ENCODE measurements at regions of chr1 and their contacts with region 1.

Region 1: GRCh38 chr1:244835276-244836134 is at the start of gene COX20:
- DNase-seq: peak; percentile 92
- ATAC-seq: peak; percentile 60
- H3K4me3 Mint-ChIP-seq: peak within 1 kb of the TSS; percentile 80
- H3K27ac Mint-ChIP-seq: peak within 1 kb of the TSS; percentile 99
- H3K4me1 Mint-ChIP-seq: peaks cover 43% of the 10 kb centered on the region
- H3K27me3 Mint-ChIP-seq: no peaks in the 10 kb centered on the region
- total RNA-seq, gene COX20: 32.0 to 33.2 TPM

Region 2: GRCh38 chr1:243255791-243256512 is 1579.6 kb before region 1 on chr1 and contains the start of gene SDCCAG8:
- CTCF ChIA-PET with region 1: no interaction called
- POLR2A ChIA-PET with region 1: no interaction called
- intact Hi-C with region 1: loop called in 1 of 2 experiments (anchors 2 kb)
- DNase-seq: peak; percentile 96
- ATAC-seq: peak; percentile 82
- H3K4me3 Mint-ChIP-seq: peak within 1 kb of the TSS; percentile 100
- H3K27ac Mint-ChIP-seq: peak within 1 kb of the TSS; percentile 97
- H3K4me1 Mint-ChIP-seq: peaks cover 27% of the 10 kb centered on the region
- H3K27me3 Mint-ChIP-seq: no peaks in the 10 kb centered on the region
- total RNA-seq, gene SDCCAG8: 26.4 to 26.5 TPM

Region 3: GRCh38 chr1:244451951-244452795 is 383.3 kb before region 1 on chr1:
- CTCF ChIA-PET with region 1: no interaction called
- POLR2A ChIA-PET with region 1: no interaction called
- intact Hi-C with region 1: loop called (anchors 1 kb)
- DNase-seq: peak; percentile 99
- ATAC-seq: peak; percentile 91
- H3K4me3 Mint-ChIP-seq: peak overlapping the region; percentile 97
- H3K27ac Mint-ChIP-seq: peak overlapping the region; percentile 97
- H3K4me1 Mint-ChIP-seq: peaks cover 40% of the 10 kb centered on the region
- H3K27me3 Mint-ChIP-seq: no peaks in the 10 kb centered on the region

Region 4: GRCh38 chr1:244796718-244797406 is 38.6 kb before region 1 on chr1:
- CTCF ChIA-PET with region 1: interaction called, 6 read pairs
- POLR2A ChIA-PET with region 1: no interaction called
- intact Hi-C with region 1: loop called in 1 of 2 experiments (anchors 2 kb)
- DNase-seq: peak; percentile 70
- ATAC-seq: peak; percentile 40
- H3K4me3 Mint-ChIP-seq: no peak overlapping the region
- H3K27ac Mint-ChIP-seq: no peak overlapping the region
- H3K4me1 Mint-ChIP-seq: peaks cover 2% of the 10 kb centered on the region
- H3K27me3 Mint-ChIP-seq: no peaks in the 10 kb centered on the region

Region 5: DNA sequence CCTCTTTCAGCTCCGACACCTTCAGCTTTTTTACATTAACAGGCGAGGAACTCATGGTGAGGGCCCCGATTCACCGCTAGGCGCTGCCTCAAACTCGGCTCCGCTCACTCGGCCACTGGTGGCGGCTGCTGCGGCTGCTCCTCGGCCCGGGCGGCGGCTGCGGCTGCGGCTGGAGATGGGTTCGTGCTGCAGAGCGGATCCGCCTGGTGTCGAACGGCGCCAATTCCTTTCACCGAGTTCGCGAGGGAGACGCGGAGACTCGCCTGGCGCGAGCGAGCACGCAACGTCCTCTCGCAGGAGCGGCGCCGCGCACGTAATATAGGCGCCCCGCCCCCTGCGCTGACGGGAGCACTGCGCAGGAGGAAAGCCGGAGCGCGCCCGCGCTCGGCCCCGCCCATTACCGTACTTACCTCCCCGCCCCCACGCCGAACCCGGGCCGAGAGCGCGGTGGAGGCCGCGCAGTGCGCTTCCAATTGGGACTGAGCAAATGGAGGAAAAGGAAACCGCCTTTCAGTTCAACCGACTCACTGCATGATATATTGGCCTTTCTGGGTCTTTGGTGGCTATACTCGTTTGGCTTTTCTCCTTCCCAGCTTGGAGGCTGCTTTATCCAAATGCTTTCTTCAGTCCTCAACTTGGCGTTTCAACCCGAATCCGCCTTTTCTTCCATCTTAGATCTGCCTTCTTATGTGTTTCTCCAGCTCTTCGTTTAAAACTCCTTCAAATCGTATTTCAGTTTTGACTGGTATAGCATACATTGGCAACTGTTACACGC is 28.9 kb after region 1 on chr1 and contains the start of gene HNRNPU:
- CTCF ChIA-PET with region 1: interaction called, 29 read pairs
- POLR2A ChIA-PET with region 1: interaction called, 74 read pairs
- intact Hi-C with region 1: loop called (anchors 1 kb)
- DNase-seq: peak; percentile 98
- ATAC-seq: peak; percentile 72
- H3K4me3 Mint-ChIP-seq: peak within 1 kb of the TSS; percentile 100
- H3K27ac Mint-ChIP-seq: peak within 1 kb of the TSS; percentile 99
- H3K4me1 Mint-ChIP-seq: peaks cover 33% of the 10 kb centered on the region
- H3K27me3 Mint-ChIP-seq: no peaks in the 10 kb centered on the region
- total RNA-seq, gene HNRNPU: 521 to 532 TPM

Region 6: DNA sequence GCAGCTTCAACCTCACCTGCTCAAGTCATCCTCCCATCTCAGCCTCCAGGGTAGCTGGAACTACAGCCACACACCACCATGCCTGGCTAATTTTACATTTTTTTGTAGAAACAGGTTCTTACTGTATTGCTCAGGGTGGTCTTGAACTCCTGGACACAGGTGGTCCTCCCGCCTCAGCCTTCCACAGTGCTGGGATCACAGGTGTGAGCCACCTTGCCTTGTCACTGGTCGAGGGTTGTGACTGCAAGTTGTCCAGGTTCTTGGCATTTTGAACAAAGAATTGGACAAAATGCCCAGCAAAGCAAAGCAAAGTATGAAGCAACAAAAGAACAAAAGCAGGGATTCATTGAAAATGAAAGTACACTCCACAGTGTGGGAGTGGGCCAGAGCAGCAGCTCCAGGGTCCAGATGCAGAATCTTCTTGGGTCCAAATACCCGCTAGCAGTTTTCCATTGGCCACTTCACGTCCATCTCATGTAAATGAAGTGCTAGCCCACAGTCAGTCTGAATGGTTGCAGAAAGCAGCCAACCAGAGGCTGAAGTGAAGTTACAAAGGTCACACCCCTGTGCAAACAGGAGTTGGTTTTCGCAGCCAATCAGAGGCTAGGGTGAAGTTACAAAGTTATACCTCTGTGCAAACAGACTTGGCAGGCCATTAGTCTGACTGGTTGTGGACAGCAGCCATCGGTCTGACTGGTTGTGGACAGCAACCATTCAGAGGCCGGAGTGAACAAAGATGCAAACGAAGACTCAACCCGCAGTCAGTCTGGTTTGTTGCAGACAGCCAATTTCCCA is 209.8 kb after region 1 on chr1:
- CTCF ChIA-PET with region 1: interaction called, 10 read pairs
- POLR2A ChIA-PET with region 1: interaction called, 5 read pairs
- intact Hi-C with region 1: loop called in 1 of 2 experiments (anchors 10 kb)
- DNase-seq: no peak
- ATAC-seq: no peak
- H3K4me3 Mint-ChIP-seq: no peak overlapping the region
- H3K27ac Mint-ChIP-seq: no peak overlapping the region
- H3K4me1 Mint-ChIP-seq: no peaks in the 10 kb centered on the region
- H3K27me3 Mint-ChIP-seq: no peaks in the 10 kb centered on the region